MCF 10A (cell line): ENCODE measurements at regions of chr4 and their contacts with region 1.

Region 1: GRCh38 chr4:108570993-108571569 is 49.3 kb upstream of the RPL34 start:
- DNase-seq: peak; percentile 29
- H3K4me3 Mint-ChIP-seq: no peak overlapping the region
- H3K27ac Mint-ChIP-seq: no peak overlapping the region
- H3K4me1 Mint-ChIP-seq: no peaks in the 10 kb centered on the region
- H3K27me3 Mint-ChIP-seq: no peaks in the 10 kb centered on the region
- CTCF ChIP-seq: no peak

Region 2: GRCh38 chr4:107757864-107758476 is 813.1 kb before region 1 on chr4:
- CTCF ChIA-PET with region 1: interaction called, 4 read pairs
- POLR2A ChIA-PET with region 1: no interaction called
- intact Hi-C with region 1: loop called (anchors 5 kb)
- DNase-seq: peak; percentile 36
- H3K4me3 Mint-ChIP-seq: no peak overlapping the region
- H3K27ac Mint-ChIP-seq: no peak overlapping the region
- H3K4me1 Mint-ChIP-seq: no peaks in the 10 kb centered on the region
- H3K27me3 Mint-ChIP-seq: no peaks in the 10 kb centered on the region
- CTCF ChIP-seq: peak; percentile 41

Region 3: DNA sequence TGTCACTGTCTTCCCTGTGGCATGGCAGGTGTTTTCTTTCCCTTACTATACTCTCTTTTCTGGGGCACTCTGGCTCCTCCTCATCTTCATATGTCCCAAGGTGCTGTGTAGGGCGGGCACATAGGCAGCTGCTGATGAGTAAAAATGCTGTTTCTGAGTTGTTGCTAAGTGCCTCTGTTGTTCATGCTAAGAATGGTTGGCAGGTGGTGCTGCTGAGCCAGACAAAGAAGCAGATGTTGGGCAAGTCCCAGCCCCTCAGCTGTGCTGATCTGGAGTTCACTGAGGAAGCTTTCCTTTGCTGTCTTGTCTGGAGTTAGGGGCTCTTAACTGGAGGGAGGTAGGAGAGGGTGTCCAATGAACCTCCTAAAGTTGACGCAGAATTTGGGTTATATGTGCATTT is 540.7 kb before region 1 on chr4:
- CTCF ChIA-PET with region 1: interaction called, 21 read pairs
- POLR2A ChIA-PET with region 1: interaction called, 5 read pairs
- intact Hi-C with region 1: loop called (anchors 1 kb)
- DNase-seq: peak; percentile 51
- H3K4me3 Mint-ChIP-seq: no peak overlapping the region
- H3K27ac Mint-ChIP-seq: peak overlapping the region; percentile 0
- H3K4me1 Mint-ChIP-seq: no peaks in the 10 kb centered on the region
- H3K27me3 Mint-ChIP-seq: no peaks in the 10 kb centered on the region
- CTCF ChIP-seq: peak; percentile 32

Region 4: DNA sequence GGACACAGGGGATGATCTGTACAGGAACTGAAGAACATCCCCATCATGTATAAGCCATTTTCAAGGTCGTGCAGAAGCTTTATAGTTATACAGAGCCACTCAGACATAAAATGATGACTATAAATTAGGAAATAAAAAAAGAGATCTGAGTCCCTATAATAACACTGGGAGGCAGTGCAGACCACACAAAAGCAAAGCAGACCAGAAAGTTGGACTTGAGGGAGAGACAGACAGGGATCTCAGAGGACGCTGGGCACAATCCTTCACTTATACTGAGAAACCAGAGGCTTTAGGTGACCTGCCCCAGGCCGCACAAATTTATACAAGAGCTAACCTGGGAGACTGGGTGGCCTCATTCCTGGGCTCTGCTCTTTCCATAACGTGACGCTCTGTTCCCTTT is 510.9 kb before region 1 on chr4:
- CTCF ChIA-PET with region 1: interaction called, 128 read pairs
- POLR2A ChIA-PET with region 1: no interaction called
- intact Hi-C with region 1: loop called (anchors 1 kb)
- DNase-seq: peak; percentile 45
- H3K4me3 Mint-ChIP-seq: no peak overlapping the region
- H3K27ac Mint-ChIP-seq: no peak overlapping the region
- H3K4me1 Mint-ChIP-seq: peaks cover 6% of the 10 kb centered on the region
- H3K27me3 Mint-ChIP-seq: no peaks in the 10 kb centered on the region
- CTCF ChIP-seq: peak; percentile 38

Region 5: GRCh38 chr4:108425988-108426387 is 145.1 kb before region 1 on chr4:
- CTCF ChIA-PET with region 1: no interaction called
- POLR2A ChIA-PET with region 1: no interaction called
- intact Hi-C with region 1: no loop called
- DNase-seq: no peak
- H3K4me3 Mint-ChIP-seq: no peak overlapping the region
- H3K27ac Mint-ChIP-seq: no peak overlapping the region
- H3K4me1 Mint-ChIP-seq: no peaks in the 10 kb centered on the region
- H3K27me3 Mint-ChIP-seq: no peaks in the 10 kb centered on the region
- CTCF ChIP-seq: no peak

Region 6: GRCh38 chr4:108544481-108544880 is 26.6 kb before region 1 on chr4:
- CTCF ChIA-PET with region 1: interaction called, 10 read pairs
- POLR2A ChIA-PET with region 1: no interaction called
- intact Hi-C with region 1: no loop called
- DNase-seq: peak; percentile 86
- H3K4me3 Mint-ChIP-seq: no peak overlapping the region
- H3K27ac Mint-ChIP-seq: peak overlapping the region; percentile 39
- H3K4me1 Mint-ChIP-seq: peaks cover 8% of the 10 kb centered on the region
- H3K27me3 Mint-ChIP-seq: no peaks in the 10 kb centered on the region
- CTCF ChIP-seq: no peak

Region 7: DNA sequence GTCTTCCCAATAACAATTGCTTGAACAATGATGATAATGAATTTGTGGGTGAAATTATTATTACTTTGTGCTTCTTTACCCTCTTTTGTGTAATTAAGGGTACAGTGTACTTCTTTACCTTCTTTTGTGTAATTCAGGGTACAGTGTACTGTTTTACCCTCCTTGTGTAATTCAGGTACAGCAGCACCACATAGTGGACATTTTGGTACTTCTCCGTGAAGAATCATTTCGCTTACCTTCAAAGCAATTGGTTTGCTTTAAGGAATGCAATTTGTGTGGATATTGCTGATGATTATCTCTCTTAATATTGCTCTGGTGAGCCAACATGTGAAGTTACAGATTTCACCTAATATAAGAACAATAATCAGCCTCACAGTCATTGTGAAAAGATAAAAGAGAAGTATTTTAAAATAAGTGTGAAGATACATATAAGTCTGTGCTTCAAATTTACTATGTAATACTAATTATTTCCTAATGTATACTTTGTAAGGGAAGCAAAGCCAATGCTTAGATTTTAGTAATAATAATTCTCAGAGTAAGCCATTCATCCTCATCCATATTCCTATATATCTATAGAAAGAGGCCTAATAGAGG is 835.4 kb after region 1 on chr4:
- CTCF ChIA-PET with region 1: no interaction called
- POLR2A ChIA-PET with region 1: no interaction called
- intact Hi-C with region 1: loop called (anchors 5 kb)
- DNase-seq: peak; percentile 68
- H3K4me3 Mint-ChIP-seq: no peak overlapping the region
- H3K27ac Mint-ChIP-seq: no peak overlapping the region
- H3K4me1 Mint-ChIP-seq: peaks cover 13% of the 10 kb centered on the region
- H3K27me3 Mint-ChIP-seq: no peaks in the 10 kb centered on the region
- CTCF ChIP-seq: peak; percentile 71